Sciatic nerve (tissue), 2 donors: ENCODE measurements at regions of chr9 and their contacts with region 1.

Region 1: GRCh38 chr9:25964239-25964638 is 286.0 kb upstream of the TUSC1 start:
- DNase-seq: no peak
- ATAC-seq: no peak

Region 2: GRCh38 chr9:25857147-25857546 is 107.1 kb before region 1 on chr9:
- intact Hi-C with region 1: no loop called
- DNase-seq: no peak
- ATAC-seq: no peak

Region 3: GRCh38 chr9:26043431-26043830 is 79.2 kb after region 1 on chr9:
- intact Hi-C with region 1: loop called (anchors 2 kb)
- DNase-seq: no peak
- ATAC-seq: peak; percentile 34